Heart right ventricle (tissue), 16 donors: ENCODE measurements at regions of chr21 and their contacts with region 1.

Region 1: GRCh38 chr21:46264690-46265144 is 20.7 kb downstream of the MCM3AP start:
- DNase-seq: no peak
- ATAC-seq: peak in 3 of 8 donors; percentile 27 to 60 (median 32)
- H3K4me3 ChIP-seq: no peak overlapping the region
- H3K27ac ChIP-seq: no peak overlapping the region
- H3K4me1 ChIP-seq: no peaks in the 10 kb centered on the region
- H3K27me3 ChIP-seq: no peaks in the 10 kb centered on the region
- CTCF ChIP-seq: no peak

Region 2: GRCh38 chr21:45950734-45951515 is 313.8 kb before region 1 on chr21:
- intact Hi-C with region 1: no loop called
- DNase-seq: peak; percentile 48 to 56
- ATAC-seq: peak; percentile 34 to 68 (median 56)
- H3K4me3 ChIP-seq: peak overlapping the region in 1 of 10 donors; percentile 7
- H3K27ac ChIP-seq: peak overlapping the region in 5 of 10 donors; percentile 44 to 72 (median 63)
- H3K4me1 ChIP-seq: peaks cover 4 to 53% (median 22%) of the 10 kb centered on the region in 9 donors
- H3K27me3 ChIP-seq: peaks cover 0 to 12% (median 0%) of the 10 kb centered on the region in 7 donors
- CTCF ChIP-seq: no peak

Region 3: GRCh38 chr21:46317710-46318473 is 53.2 kb after region 1 on chr21:
- intact Hi-C with region 1: loop called in 1 of 10 experiments (anchors 10 kb)
- DNase-seq: peak; percentile 49 to 59
- ATAC-seq: peak; percentile 44 to 92 (median 78)
- H3K4me3 ChIP-seq: no peak overlapping the region
- H3K27ac ChIP-seq: no peak overlapping the region
- H3K4me1 ChIP-seq: peaks cover 6 to 33% (median 13%) of the 10 kb centered on the region in 9 donors
- H3K27me3 ChIP-seq: no peaks in the 10 kb centered on the region
- CTCF ChIP-seq: no peak

Region 4: GRCh38 chr21:46431884-46432488 is 167.3 kb after region 1 on chr21:
- intact Hi-C with region 1: loop called in 1 of 10 experiments (anchors 10 kb)
- DNase-seq: no peak
- ATAC-seq: peak in 1 of 8 donors; percentile 18
- H3K4me3 ChIP-seq: no peak overlapping the region
- H3K27ac ChIP-seq: no peak overlapping the region
- H3K4me1 ChIP-seq: no peaks in the 10 kb centered on the region
- H3K27me3 ChIP-seq: no peaks in the 10 kb centered on the region
- CTCF ChIP-seq: no peak